ENCODE measurements at regions of chrX and their contacts with region 1.

Region 1: DNA sequence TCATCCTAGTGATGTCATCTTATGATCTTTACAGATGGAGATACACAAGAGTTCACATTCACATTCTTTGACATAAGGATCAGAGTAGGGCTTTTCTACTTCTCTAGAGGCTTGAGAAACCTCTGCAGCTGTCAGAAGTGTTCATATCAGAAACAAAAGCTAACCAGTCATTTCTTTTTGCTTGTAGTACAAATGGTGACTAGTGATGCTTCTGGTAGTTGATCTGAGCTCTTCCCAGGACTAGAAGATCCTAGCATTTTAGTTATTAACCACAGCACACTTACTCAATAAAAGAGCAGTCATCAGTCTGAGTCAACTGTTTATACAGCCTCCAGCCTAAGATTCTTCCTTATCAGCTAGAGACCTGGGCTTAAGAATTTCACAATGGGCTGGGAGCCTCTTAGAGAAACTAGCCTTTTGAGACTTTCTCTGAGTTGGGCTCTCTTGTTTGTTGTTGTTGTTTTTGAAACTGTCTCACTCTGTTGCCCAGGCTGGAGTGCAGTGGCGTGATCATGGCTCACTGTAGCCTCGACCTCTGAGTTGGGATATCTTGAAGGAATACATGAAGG is 84.1 kb downstream of the TMEM164 start:
- DNase-seq: peak; percentile 88
- H3K4me3 ChIP-seq: no peak overlapping the region
- H3K27ac ChIP-seq: peak overlapping the region; percentile 99
- H3K4me1 ChIP-seq: peaks cover 40% of the 10 kb centered on the region
- H3K27me3 ChIP-seq: no peaks in the 10 kb centered on the region
- CTCF ChIP-seq: no peak

Region 2: DNA sequence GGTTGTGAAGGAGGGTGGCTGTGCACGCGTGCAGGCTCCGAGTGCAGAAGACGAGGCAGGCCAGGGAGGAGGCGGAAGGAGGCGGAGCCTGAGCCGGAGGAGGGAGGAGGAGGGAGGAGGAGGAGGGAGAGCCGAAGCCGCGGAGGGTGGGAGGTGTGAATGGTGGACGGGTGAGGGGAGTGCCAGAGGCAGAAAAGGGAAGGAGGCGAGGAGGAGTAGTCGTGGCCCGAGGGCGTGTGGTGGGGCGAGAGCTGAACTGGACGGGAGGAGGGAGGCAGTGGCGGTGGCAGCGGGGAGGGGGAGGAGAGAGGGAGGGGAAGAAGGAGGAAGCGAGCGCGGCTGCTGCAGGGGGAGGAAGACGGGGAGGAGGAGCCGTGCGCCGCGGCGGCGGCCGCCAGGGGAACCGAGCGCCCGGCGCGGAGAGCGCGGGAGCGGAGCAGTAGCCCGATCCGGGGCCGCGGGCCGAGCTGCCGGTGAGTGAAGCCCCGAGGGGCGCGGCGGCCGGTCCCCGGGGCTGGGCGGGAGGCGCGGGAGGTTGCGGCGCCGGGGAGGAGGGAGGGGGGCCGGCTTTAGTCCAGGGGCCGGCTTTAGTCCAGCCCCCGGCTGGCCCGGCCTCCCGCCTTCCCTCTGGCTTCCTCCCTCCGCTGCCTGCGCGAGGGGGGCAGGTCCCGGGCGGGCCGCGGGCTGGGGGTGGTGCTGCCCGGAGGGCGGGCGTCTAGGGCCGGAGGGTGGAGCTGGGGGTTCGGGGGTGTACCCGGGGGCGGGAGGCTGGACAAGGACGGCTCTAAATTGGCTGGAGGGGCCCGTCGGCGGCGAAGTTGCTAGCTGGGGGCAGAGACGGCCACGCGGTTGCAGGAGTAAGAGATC is 84.5 kb before region 1 on chrX and contains the start of gene TMEM164:
- CTCF ChIA-PET with region 1: no interaction called
- dilution Hi-C with region 1: no loop called
- in situ Hi-C with region 1: no loop called
- intact Hi-C with region 1: loop called (anchors 1 kb)
- DNase-seq: peak; percentile 77
- H3K4me3 ChIP-seq: peak within 1 kb of the TSS; percentile 53 to 76 (median 64)
- H3K27ac ChIP-seq: peak within 1 kb of the TSS; percentile 35
- H3K4me1 ChIP-seq: peaks cover 20% of the 10 kb centered on the region
- H3K27me3 ChIP-seq: peaks cover 1% of the 10 kb centered on the region
- CTCF ChIP-seq: no peak
- total RNA-seq, gene TMEM164: 8.3 to 19.1 TPM

Region 3: DNA sequence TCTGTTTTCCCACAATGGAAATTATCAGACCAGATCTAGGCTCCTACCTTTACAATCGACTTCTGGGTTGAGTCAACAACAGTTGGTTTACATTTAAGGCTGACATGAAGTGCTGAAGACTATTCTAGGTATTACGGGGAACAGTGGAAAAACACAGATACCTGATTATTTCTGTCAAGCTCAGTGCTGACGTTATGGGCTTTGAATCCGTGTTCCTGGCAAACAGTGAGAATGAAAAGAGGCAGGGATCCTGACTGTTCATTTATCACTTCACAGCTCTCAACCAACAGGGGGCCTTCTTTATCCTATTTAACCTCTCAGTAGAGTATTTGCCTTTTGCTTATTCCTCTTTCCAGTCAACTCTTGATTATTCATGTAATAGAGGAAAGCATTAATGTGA is 41.0 kb before region 1 on chrX:
- CTCF ChIA-PET with region 1: no interaction called
- dilution Hi-C with region 1: no loop called
- in situ Hi-C with region 1: loop called in 1 of 2 experiments (anchors 5 kb)
- intact Hi-C with region 1: no loop called
- DNase-seq: no peak
- H3K4me3 ChIP-seq: no peak overlapping the region
- H3K27ac ChIP-seq: no peak overlapping the region
- H3K4me1 ChIP-seq: no peaks in the 10 kb centered on the region
- H3K27me3 ChIP-seq: no peaks in the 10 kb centered on the region
- CTCF ChIP-seq: no peak